ENCODE measurements at regions of chr1 and their contacts with region 1.

Region 1: DNA sequence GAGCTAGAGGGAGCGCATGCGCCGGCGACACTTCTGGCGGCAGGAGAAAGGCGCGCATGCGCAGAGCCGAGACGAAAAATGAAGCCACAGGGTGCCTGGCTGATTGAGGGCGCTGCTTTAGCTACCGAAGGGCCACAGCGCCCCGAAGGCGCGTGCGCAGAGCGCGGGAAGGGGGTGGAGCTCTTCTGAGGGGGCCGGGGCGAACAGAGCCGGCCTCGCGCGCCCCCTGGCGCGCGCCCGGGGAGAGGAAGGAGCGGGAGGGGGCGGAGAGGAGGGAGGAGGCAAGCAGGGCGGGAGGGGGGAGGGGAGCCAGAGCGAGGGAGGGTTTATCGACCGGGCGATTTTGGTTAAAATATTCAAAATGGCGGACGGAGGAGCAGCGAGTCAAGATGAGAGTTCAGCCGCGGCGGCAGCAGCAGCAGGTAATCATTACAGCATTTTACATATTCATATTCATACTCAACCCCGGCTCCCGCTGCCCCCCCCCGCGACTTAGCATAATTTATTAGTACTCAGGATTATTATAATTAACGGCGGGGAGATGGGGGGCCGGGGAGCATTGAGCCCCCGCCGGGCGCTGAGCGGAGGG is at the start of gene POU2F1:
- DNase-seq: peak; percentile 98 to 100 (median 99)
- ATAC-seq: peak; percentile 80
- H3K4me3 ChIP-seq: peak within 1 kb of the TSS; percentile 94
- H3K4me3 Mint-ChIP-seq: peak within 1 kb of the TSS; percentile 99
- H3K27ac ChIP-seq: peak within 1 kb of the TSS; percentile 87 to 98
- H3K27ac Mint-ChIP-seq: peak within 1 kb of the TSS; percentile 94
- H3K4me1 ChIP-seq: peaks cover 16% of the 10 kb centered on the region
- H3K4me1 Mint-ChIP-seq: peaks cover 40% of the 10 kb centered on the region
- H3K27me3 ChIP-seq: no peaks in the 10 kb centered on the region
- H3K27me3 Mint-ChIP-seq: no peaks in the 10 kb centered on the region
- CTCF ChIP-seq: peak; percentile 53
- total RNA-seq, gene POU2F1: 27.0 to 28.6 TPM

Region 2: DNA sequence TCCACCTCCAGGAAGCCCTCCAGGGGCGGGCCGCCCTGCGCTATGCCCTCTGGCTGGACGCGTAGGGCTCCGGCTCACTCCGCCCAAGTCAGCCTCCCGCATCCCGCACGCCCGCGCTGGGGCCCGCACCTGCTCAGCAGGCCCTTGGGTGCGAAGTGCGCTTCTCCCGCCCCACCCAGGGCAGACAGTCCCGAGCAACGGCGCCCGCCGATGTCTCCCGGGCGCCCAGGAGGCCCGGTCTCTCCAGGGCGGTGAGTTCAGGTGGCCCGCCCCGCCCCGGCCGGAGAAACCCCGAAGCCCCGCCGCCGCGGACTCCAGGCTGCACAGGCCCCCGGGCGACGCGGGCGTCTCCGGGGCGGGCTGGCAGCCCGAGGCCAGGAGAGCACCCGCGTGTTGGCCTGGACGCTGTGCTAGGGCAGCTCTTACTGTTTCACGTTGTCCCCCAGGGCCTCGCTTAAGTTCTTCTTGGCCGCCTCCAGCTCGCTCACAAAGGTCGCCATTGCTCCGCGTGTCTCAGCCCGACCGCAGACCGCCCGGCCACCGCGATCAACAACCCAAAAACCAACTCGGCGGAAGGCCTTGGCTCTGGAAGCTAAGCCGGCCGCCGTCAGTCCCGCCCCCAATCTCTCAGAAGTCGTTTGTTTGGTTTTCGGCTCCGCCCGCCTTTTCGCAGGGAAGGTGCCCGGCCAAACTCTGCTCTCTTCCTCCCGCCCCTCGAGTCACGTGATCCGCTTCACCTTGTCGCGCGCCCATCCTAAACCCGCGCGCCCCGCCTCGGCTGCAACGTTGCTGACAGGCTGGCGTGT is 344.7 kb before region 1 on chr1 and contains the start of gene TADA1:
- CTCF ChIA-PET with region 1: no interaction called
- POLR2A ChIA-PET with region 1: interaction called, 15 read pairs
- intact Hi-C with region 1: loop called in 1 of 2 experiments (anchors 5 kb)
- DNase-seq: peak; percentile 94 to 99 (median 98)
- ATAC-seq: peak; percentile 89
- H3K4me3 ChIP-seq: peak within 1 kb of the TSS; percentile 75
- H3K4me3 Mint-ChIP-seq: peak within 1 kb of the TSS; percentile 92
- H3K27ac ChIP-seq: peak within 1 kb of the TSS; percentile 52 to 73
- H3K27ac Mint-ChIP-seq: peak within 1 kb of the TSS; percentile 88
- H3K4me1 ChIP-seq: peaks cover 27% of the 10 kb centered on the region
- H3K4me1 Mint-ChIP-seq: peaks cover 58% of the 10 kb centered on the region
- H3K27me3 ChIP-seq: no peaks in the 10 kb centered on the region
- H3K27me3 Mint-ChIP-seq: no peaks in the 10 kb centered on the region
- CTCF ChIP-seq: no peak
- total RNA-seq, gene TADA1: 15.8 to 16.4 TPM

Region 3: GRCh38 chr1:167090314-167090942 is 130.2 kb before region 1 on chr1 and contains the start of gene GPA33:
- CTCF ChIA-PET with region 1: no interaction called
- POLR2A ChIA-PET with region 1: interaction called, 30 read pairs
- intact Hi-C with region 1: loop called in 1 of 2 experiments (anchors 10 kb)
- DNase-seq: peak in 11 of 14 experiments; percentile 11 to 84 (median 40)
- ATAC-seq: peak; percentile 97
- H3K4me3 ChIP-seq: peak within 1 kb of the TSS; percentile 48
- H3K4me3 Mint-ChIP-seq: peak within 1 kb of the TSS; percentile 84
- H3K27ac ChIP-seq: peak within 1 kb of the TSS; percentile 82 to 90
- H3K27ac Mint-ChIP-seq: peak within 1 kb of the TSS; percentile 98
- H3K4me1 ChIP-seq: peaks cover 41% of the 10 kb centered on the region
- H3K4me1 Mint-ChIP-seq: peaks cover 72% of the 10 kb centered on the region
- H3K27me3 ChIP-seq: no peaks in the 10 kb centered on the region
- H3K27me3 Mint-ChIP-seq: no peaks in the 10 kb centered on the region
- CTCF ChIP-seq: no peak
- total RNA-seq, gene GPA33: 4.8 to 5.0 TPM

Region 4: GRCh38 chr1:167442124-167442848 is 221.7 kb after region 1 on chr1:
- CTCF ChIA-PET with region 1: interaction called, 7 read pairs
- POLR2A ChIA-PET with region 1: interaction called, 17 read pairs
- intact Hi-C with region 1: loop called in 1 of 2 experiments (anchors 5 kb)
- DNase-seq: peak; percentile 79 to 92 (median 88)
- ATAC-seq: peak; percentile 84
- H3K4me3 ChIP-seq: no peak overlapping the region
- H3K4me3 Mint-ChIP-seq: peak overlapping the region; percentile 45
- H3K27ac ChIP-seq: peak overlapping the region in 1 of 2 donors; percentile 41
- H3K27ac Mint-ChIP-seq: peak overlapping the region; percentile 100
- H3K4me1 ChIP-seq: peaks cover 91% of the 10 kb centered on the region
- H3K4me1 Mint-ChIP-seq: peaks cover 89% of the 10 kb centered on the region
- H3K27me3 ChIP-seq: no peaks in the 10 kb centered on the region
- H3K27me3 Mint-ChIP-seq: no peaks in the 10 kb centered on the region
- CTCF ChIP-seq: peak; percentile 86

Region 5: GRCh38 chr1:167517535-167518330 is 297.1 kb after region 1 on chr1:
- CTCF ChIA-PET with region 1: interaction called, 4 read pairs
- POLR2A ChIA-PET with region 1: interaction called, 90 read pairs
- intact Hi-C with region 1: no loop called
- DNase-seq: peak; percentile 70 to 93 (median 83)
- ATAC-seq: peak; percentile 71
- H3K4me3 ChIP-seq: peak overlapping the region; percentile 89
- H3K4me3 Mint-ChIP-seq: peak overlapping the region; percentile 99
- H3K27ac ChIP-seq: peak overlapping the region; percentile 91 to 96
- H3K27ac Mint-ChIP-seq: peak overlapping the region; percentile 100
- H3K4me1 ChIP-seq: peaks cover 31% of the 10 kb centered on the region
- H3K4me1 Mint-ChIP-seq: peaks cover 69% of the 10 kb centered on the region
- H3K27me3 ChIP-seq: no peaks in the 10 kb centered on the region
- H3K27me3 Mint-ChIP-seq: no peaks in the 10 kb centered on the region
- CTCF ChIP-seq: no peak

Region 6: DNA sequence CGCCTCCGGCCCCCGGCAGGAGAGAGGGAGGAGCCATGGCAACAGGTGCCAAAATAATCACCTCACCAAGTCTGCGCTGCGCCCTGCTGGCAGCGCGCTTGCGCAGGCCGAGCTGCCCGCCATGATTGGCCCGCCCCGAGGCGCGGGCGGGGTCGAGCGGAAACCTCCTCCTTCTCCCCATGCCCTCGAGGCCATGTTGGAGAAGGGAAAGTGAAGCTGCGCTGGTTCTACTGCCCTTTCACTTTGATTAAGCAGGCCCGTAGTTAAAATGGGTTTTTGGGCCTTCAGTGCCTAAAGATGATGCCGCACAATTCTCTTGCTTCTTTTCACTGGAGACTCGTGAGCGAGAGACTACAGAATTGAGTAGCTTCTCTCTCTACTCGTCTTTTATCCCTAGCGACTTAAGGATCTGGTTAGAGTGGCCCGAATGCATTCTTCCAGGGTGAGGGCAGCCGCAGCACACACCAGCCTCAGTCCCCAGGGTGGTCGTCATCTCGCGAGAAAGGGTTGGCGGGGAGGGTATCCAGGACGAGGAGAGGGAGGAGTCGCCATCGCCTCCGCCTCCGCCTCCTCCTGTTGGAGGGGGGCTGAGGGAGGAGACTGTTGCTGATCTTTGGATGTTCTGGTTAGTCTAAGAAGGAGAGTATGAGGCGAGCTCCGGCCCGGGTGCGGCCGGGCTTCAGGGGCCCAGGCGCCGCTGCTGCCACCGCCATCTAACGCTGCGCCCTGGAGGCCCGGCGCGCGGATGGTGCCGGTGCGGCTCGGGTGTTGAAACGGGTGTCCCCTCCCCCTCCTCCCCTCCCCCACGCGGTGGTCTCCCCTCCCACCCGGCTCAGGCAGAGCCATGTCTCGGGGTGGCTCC is 715.7 kb after region 1 on chr1 and contains the start of gene DCAF6:
- CTCF ChIA-PET with region 1: interaction called, 5 read pairs
- POLR2A ChIA-PET with region 1: interaction called, 9 read pairs
- intact Hi-C with region 1: loop called (anchors 5 to 10 kb)
- DNase-seq: peak; percentile 93 to 100 (median 96)
- ATAC-seq: peak; percentile 81
- H3K4me3 ChIP-seq: peak within 1 kb of the TSS; percentile 95
- H3K4me3 Mint-ChIP-seq: peak within 1 kb of the TSS; percentile 94
- H3K27ac ChIP-seq: peak within 1 kb of the TSS; percentile 77 to 96
- H3K27ac Mint-ChIP-seq: peak within 1 kb of the TSS; percentile 99
- H3K4me1 ChIP-seq: peaks cover 5% of the 10 kb centered on the region
- H3K4me1 Mint-ChIP-seq: peaks cover 62% of the 10 kb centered on the region
- H3K27me3 ChIP-seq: no peaks in the 10 kb centered on the region
- H3K27me3 Mint-ChIP-seq: no peaks in the 10 kb centered on the region
- CTCF ChIP-seq: no peak
- total RNA-seq, gene DCAF6: 13.3 to 13.6 TPM

Region 7: DNA sequence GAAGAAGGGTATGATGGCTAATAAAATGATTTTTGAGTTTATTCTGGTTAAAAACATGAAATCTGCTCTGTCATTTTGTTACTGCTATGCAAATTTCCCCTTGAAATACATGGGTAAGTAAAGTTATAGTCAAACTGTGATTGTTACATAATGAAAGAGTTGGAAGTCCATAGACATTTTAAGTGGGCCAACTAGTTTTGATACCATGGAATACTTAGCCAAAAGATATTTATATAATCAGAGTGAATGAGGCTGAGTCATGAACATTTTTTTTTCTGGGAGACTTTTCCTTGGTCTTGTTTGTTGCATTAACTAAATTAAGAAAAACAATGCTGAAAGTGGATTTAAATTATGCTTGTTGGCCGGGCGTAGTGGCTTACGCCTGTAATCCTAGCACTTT is 774.4 kb after region 1 on chr1:
- CTCF ChIA-PET with region 1: no interaction called
- POLR2A ChIA-PET with region 1: no interaction called
- intact Hi-C with region 1: no loop called
- DNase-seq: no peak
- ATAC-seq: no peak
- H3K4me3 ChIP-seq: no peak overlapping the region
- H3K4me3 Mint-ChIP-seq: no peak overlapping the region
- H3K27ac ChIP-seq: no peak overlapping the region
- H3K27ac Mint-ChIP-seq: no peak overlapping the region
- H3K4me1 ChIP-seq: no peaks in the 10 kb centered on the region
- H3K4me1 Mint-ChIP-seq: peaks cover 6% of the 10 kb centered on the region
- H3K27me3 ChIP-seq: no peaks in the 10 kb centered on the region
- H3K27me3 Mint-ChIP-seq: no peaks in the 10 kb centered on the region
- CTCF ChIP-seq: no peak